ENCODE measurements at regions of chr20 and their contacts with region 1.

Region 1: GRCh38 chr20:5658912-5659345 is 91.3 kb upstream of the SHLD1 start:
- DNase-seq: peak; percentile 90
- H3K4me3 ChIP-seq: peak overlapping the region in 3 of 4 donors; percentile 7 to 27 (median 11)
- H3K27ac ChIP-seq: peak overlapping the region; percentile 82 to 92 (median 88)
- H3K4me1 ChIP-seq: peaks cover 0 to 53% (median 51%) of the 10 kb centered on the region in 4 donors
- H3K27me3 ChIP-seq: no peaks in the 10 kb centered on the region
- CTCF ChIP-seq: no peak
- EP300 ChIP-seq: no peak
- POLR2A ChIP-seq: no peak

Region 2: GRCh38 chr20:5119435-5120188 is 539.3 kb before region 1 on chr20 and contains the start of gene PCNA:
- intact Hi-C with region 1: no loop called
- DNase-seq: peak; percentile 99
- H3K4me3 ChIP-seq: peak within 1 kb of the TSS; percentile 67 to 81 (median 76)
- H3K27ac ChIP-seq: peak within 1 kb of the TSS; percentile 92 to 97 (median 93)
- H3K4me1 ChIP-seq: peaks cover 0 to 24% (median 21%) of the 10 kb centered on the region in 4 donors
- H3K27me3 ChIP-seq: no peaks in the 10 kb centered on the region
- CTCF ChIP-seq: no peak
- EP300 ChIP-seq: no peak
- POLR2A ChIP-seq: peak; percentile 67 to 86
- total RNA-seq, gene PCNA: 24.6 to 54.8 (median 40.0) TPM

Region 3: GRCh38 chr20:5731753-5732366 is 72.9 kb after region 1 on chr20:
- intact Hi-C with region 1: loop called (anchors 5 kb)
- DNase-seq: no peak
- H3K4me3 ChIP-seq: no peak overlapping the region
- H3K27ac ChIP-seq: peak overlapping the region; percentile 67 to 77 (median 74)
- H3K4me1 ChIP-seq: peaks cover 0 to 50% (median 29%) of the 10 kb centered on the region in 4 donors
- H3K27me3 ChIP-seq: no peaks in the 10 kb centered on the region
- CTCF ChIP-seq: no peak
- EP300 ChIP-seq: peak in 1 of 4 donors; percentile 5
- POLR2A ChIP-seq: no peak

Region 4: GRCh38 chr20:5749952-5750779 is 91.2 kb after region 1 on chr20 and contains the start of gene SHLD1:
- intact Hi-C with region 1: loop called (anchors 2 kb)
- DNase-seq: peak; percentile 90
- H3K4me3 ChIP-seq: peak within 1 kb of the TSS; percentile 54 to 64 (median 61)
- H3K27ac ChIP-seq: peak within 1 kb of the TSS; percentile 82 to 88 (median 86)
- H3K4me1 ChIP-seq: peaks cover 0 to 10% (median 6%) of the 10 kb centered on the region in 4 donors
- H3K27me3 ChIP-seq: no peaks in the 10 kb centered on the region
- CTCF ChIP-seq: no peak
- EP300 ChIP-seq: no peak
- POLR2A ChIP-seq: no peak
- total RNA-seq, gene SHLD1: 0.99 to 6.1 (median 3.4) TPM